ENCODE measurements at regions of chr19 and their contacts with region 1.

Region 1: DNA sequence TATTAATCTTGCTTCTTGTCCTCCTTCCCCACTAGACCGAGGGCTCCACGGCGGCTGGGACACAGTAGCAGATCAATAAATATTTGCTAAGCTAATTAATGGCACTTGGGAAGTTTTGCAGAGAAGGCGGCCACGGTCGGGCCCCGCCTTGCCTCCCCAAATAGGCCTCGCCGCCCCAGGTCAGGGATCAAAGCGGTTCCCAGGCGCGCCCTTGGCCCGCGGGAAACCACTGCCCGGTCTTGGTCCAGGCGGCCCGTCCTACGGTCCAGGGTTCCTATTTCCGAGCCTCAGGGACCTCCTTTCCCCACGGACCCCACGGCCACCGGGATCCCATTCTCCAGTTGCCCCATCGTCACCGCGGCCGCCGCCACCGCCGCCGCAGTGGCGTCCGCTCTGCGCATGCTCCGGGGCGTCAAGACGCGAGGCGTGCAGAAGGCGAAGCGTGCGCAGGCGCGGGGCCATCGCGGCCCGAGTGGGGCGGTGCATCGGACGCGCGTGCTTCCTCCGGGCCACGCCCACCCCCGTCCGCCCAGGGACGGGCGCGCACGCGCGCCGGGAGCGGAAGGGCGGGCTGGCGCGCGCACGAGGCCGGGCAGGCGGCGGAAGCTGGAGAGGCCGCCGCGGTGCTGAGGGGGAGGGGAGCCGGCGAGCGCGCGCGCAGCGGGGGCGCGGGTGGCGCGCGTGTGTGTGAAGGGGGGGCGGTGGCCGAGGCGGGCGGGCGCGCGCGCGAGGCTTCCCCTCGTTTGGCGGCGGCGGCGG is at the start of gene SMARCA4:
- DNase-seq: peak; percentile 99
- ATAC-seq: peak; percentile 76
- H3K4me3 Mint-ChIP-seq: peak within 1 kb of the TSS; percentile 89
- H3K27ac Mint-ChIP-seq: peak within 1 kb of the TSS; percentile 90
- H3K4me1 Mint-ChIP-seq: peaks cover 38% of the 10 kb centered on the region
- H3K27me3 Mint-ChIP-seq: no peaks in the 10 kb centered on the region
- total RNA-seq, gene SMARCA4: 102 to 116 TPM

Region 2: GRCh38 chr19:10653715-10654492 is 306.6 kb before region 1 on chr19 and contains the start of gene ILF3:
- CTCF ChIA-PET with region 1: no interaction called
- POLR2A ChIA-PET with region 1: no interaction called
- intact Hi-C with region 1: loop called in 1 of 2 experiments (anchors 1 kb)
- DNase-seq: peak; percentile 100
- ATAC-seq: peak; percentile 82
- H3K4me3 Mint-ChIP-seq: peak within 1 kb of the TSS; percentile 86
- H3K27ac Mint-ChIP-seq: peak within 1 kb of the TSS; percentile 97
- H3K4me1 Mint-ChIP-seq: peaks cover 34% of the 10 kb centered on the region
- H3K27me3 Mint-ChIP-seq: no peaks in the 10 kb centered on the region
- total RNA-seq, gene ILF3: 433 to 570 TPM

Region 3: GRCh38 chr19:10854350-10855089 is 106.0 kb before region 1 on chr19:
- CTCF ChIA-PET with region 1: no interaction called
- POLR2A ChIA-PET with region 1: no interaction called
- intact Hi-C with region 1: no loop called
- DNase-seq: no peak
- ATAC-seq: no peak
- H3K4me3 Mint-ChIP-seq: no peak overlapping the region
- H3K27ac Mint-ChIP-seq: no peak overlapping the region
- H3K4me1 Mint-ChIP-seq: no peaks in the 10 kb centered on the region
- H3K27me3 Mint-ChIP-seq: no peaks in the 10 kb centered on the region

Region 4: DNA sequence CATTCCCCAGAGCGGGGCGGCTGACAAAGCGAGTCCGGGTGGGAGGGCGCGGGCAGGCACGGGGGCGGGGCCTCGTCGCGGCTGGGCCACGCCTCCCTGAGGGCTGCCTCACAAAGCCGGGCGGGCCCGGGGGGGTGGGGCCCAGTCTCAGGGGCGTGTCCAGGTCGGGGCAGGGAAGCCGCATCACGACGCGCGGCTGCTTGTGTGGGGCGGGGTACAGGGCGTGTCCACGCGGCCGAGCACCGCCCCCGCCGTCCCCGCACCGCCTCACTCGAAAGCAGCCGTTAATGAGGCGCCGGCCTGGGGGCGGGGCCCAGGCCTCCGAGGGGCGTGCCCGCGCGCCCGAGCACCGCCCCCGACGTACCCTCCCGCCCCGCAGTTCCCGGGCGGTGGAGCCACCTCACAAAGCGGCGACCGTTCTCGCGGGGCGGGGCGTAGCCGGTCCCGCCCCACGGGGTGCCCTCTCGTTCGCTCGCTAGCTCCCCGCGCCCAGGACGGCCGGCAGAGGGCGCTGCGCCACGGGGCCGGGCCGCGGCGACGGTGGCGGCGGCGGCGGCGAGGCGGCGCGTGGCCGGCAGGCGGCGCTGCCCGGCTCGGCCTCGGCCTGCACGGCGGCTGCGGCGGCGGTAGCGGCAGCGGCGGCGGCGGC is 89.4 kb before region 1 on chr19 and contains the start of gene CARM1:
- CTCF ChIA-PET with region 1: interaction called, 3 read pairs
- POLR2A ChIA-PET with region 1: no interaction called
- intact Hi-C with region 1: loop called in 1 of 2 experiments (anchors 1 kb)
- DNase-seq: peak; percentile 100
- ATAC-seq: peak; percentile 88
- H3K4me3 Mint-ChIP-seq: peak within 1 kb of the TSS; percentile 80
- H3K27ac Mint-ChIP-seq: peak within 1 kb of the TSS; percentile 97
- H3K4me1 Mint-ChIP-seq: peaks cover 28% of the 10 kb centered on the region
- H3K27me3 Mint-ChIP-seq: no peaks in the 10 kb centered on the region
- total RNA-seq, gene CARM1: 82.3 to 96.8 TPM

Region 5: DNA sequence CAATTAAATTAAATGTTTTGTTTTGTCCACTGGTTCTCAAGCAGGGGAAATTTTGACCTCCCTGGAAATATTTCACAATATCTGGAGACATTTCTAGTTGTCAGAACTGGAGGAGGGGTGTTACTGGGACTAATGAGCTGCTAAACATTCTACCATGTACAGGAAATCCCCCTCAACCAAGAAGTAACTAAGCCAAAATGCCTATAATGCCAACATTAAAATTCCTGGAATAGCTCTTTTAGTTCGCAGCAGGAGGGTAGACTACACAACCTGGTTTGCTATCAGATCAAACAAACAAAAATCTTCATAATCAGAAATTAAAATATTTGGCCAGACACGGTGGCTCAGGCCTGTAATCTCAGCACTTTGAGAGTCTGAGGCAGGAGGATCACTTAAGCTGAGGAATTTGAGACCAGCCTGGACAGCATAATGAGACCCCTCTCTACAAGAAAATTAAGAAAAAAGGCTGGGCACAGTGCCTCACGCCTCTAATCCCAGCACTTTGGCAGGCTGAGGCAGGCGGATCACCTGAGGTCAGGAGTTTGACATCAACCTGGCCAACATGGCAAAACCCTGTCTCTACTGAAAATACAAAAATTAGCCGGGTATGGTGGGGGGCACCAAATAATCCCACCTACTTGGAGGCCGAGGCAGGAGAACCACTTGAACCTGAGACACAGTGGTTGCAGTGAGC is 13.4 kb before region 1 on chr19:
- CTCF ChIA-PET with region 1: interaction called, 24 read pairs
- POLR2A ChIA-PET with region 1: no interaction called
- intact Hi-C with region 1: loop called in 1 of 2 experiments (anchors 1 kb)
- DNase-seq: no peak
- ATAC-seq: no peak
- H3K4me3 Mint-ChIP-seq: no peak overlapping the region
- H3K27ac Mint-ChIP-seq: no peak overlapping the region
- H3K4me1 Mint-ChIP-seq: peaks cover 6% of the 10 kb centered on the region
- H3K27me3 Mint-ChIP-seq: no peaks in the 10 kb centered on the region

Region 6: DNA sequence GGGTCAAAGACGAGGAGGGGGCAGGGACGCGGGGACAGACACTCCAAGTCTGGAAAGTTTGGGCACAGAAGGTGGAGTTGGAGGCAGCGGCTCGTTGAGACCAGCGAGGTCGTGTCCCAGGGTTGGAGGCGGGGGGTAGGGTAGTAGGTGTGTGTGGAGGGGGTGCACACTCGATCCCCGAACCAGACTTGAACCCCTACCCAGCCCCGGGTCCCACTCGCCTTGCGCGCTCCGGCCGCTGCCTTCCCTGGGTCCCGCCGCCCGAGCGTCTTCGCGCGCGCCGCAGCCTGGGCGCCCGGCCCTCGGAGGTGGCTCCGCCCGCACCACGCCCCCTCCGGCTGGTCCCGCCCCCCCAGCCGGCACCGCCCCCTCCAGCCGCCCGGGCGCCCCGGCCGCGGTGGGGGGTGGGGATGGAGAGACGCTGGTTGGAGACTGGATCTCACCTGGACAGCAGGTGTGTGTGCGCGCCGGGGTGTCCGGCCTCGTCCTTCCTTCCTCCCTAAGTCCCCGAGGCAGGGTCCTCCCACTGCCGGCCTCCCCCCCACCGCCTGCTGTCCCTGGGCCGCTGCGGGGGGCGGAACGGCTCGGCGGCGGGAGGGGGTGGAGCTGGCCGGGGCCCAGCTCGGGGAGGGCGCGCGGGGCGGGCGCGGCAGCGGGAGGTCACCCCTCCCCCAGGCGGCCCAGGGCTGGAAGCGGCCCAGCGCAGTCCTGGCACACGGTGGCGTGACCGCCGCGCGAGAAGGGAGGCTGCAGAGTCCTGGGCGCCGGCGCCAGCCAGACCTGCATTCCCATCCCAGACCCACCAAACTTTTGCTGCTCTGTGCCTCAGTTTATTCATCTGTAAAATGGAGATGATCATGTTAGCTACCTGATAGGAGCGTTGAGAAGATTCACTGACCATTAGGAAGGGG is 237.0 kb after region 1 on chr19 and contains the start of gene KANK2:
- CTCF ChIA-PET with region 1: no interaction called
- POLR2A ChIA-PET with region 1: no interaction called
- intact Hi-C with region 1: loop called in 1 of 2 experiments (anchors 1 kb)
- DNase-seq: peak; percentile 88
- ATAC-seq: peak; percentile 92
- H3K4me3 Mint-ChIP-seq: peak within 1 kb of the TSS; percentile 53
- H3K27ac Mint-ChIP-seq: no peak within 1 kb of the TSS
- H3K4me1 Mint-ChIP-seq: peaks cover 7% of the 10 kb centered on the region
- H3K27me3 Mint-ChIP-seq: peaks cover 11% of the 10 kb centered on the region
- total RNA-seq, gene KANK2: 0.91 to 1.2 TPM

Region 7: GRCh38 chr19:11558881-11559828 is 598.7 kb after region 1 on chr19 and contains the start of gene ELOF1:
- CTCF ChIA-PET with region 1: interaction called, 3 read pairs
- POLR2A ChIA-PET with region 1: no interaction called
- intact Hi-C with region 1: loop called in 1 of 2 experiments (anchors 1 kb)
- DNase-seq: peak; percentile 99
- ATAC-seq: peak; percentile 93
- H3K4me3 Mint-ChIP-seq: peak within 1 kb of the TSS; percentile 90
- H3K27ac Mint-ChIP-seq: peak within 1 kb of the TSS; percentile 94
- H3K4me1 Mint-ChIP-seq: peaks cover 44% of the 10 kb centered on the region
- H3K27me3 Mint-ChIP-seq: no peaks in the 10 kb centered on the region
- total RNA-seq, gene ELOF1: 48.0 to 53.7 TPM